HepG2 (cell line): ENCODE measurements at regions of chr12 and their contacts with region 1.

Region 1: GRCh38 chr12:92629349-92630065 is 73.3 kb upstream of the PLEKHG7 start:
- DNase-seq: no peak
- ATAC-seq: no peak
- H3K4me3 ChIP-seq: no peak overlapping the region
- H3K27ac ChIP-seq: no peak overlapping the region
- H3K4me1 ChIP-seq: no peaks in the 10 kb centered on the region
- H3K27me3 ChIP-seq: 0 out of 5 replicates have a peak, but pooled peaks cover 0 to 3% of the 10 kb centered on the region in 2 experiments
- CTCF ChIP-seq: no peak
- EP300 ChIP-seq: no peak
- POLR2A ChIP-seq: no peak
- RAD21 ChIP-seq: no peak

Region 2: GRCh38 chr12:92717202-92717601 is 87.7 kb after region 1 on chr12:
- CTCF ChIA-PET with region 1: no interaction called
- POLR2A ChIA-PET with region 1: no interaction called
- in situ Hi-C with region 1: no loop called
- intact Hi-C with region 1: no loop called
- DNase-seq: no peak
- ATAC-seq: no peak
- H3K4me3 ChIP-seq: no peak overlapping the region
- H3K27ac ChIP-seq: no peak overlapping the region
- H3K4me1 ChIP-seq: peaks cover 9% of the 10 kb centered on the region
- H3K27me3 ChIP-seq: no peaks in the 10 kb centered on the region; a peak in 1 of 5 replicates
- CTCF ChIP-seq: 0 out of 2 replicates have a peak, but pooled peaks have one; percentile 17
- EP300 ChIP-seq: no peak
- POLR2A ChIP-seq: no peak
- RAD21 ChIP-seq: no peak

Region 3: DNA sequence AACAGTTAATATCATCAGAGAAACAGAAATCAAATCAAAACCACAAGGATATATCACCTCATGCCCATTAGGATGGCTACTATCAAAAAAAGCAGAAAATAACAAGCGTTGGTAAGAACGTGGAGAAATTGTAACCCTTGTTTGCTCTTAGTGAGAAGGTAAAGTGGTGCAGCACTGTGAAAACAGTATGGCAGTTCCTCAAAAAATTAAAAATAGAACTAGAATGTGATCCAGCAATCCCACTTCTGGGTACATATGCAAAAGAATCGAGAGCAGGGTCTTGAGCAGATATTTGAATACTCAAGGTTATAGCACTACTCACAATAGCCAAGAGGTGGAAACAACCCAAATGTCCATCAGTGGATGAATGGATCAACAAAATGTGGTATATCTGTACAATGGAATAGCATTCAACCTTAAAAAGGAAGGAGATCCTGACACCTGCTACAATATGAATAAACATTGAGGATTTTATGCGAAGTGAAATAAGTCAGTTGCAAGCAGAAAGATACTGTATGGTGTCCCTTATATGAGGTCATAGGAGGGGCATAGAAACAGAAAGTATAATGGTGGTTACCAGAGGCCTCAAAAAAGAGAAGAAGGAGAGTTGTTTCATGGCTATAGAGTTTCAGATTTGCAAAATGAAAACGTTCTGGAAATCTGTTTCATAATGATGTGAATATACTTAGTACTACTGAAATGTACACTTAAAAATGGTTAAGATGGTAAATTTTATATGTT is 430.6 kb after region 1 on chr12:
- CTCF ChIA-PET with region 1: no interaction called
- POLR2A ChIA-PET with region 1: no interaction called
- in situ Hi-C with region 1: no loop called
- intact Hi-C with region 1: loop called (anchors 10 kb)
- DNase-seq: no peak
- ATAC-seq: no peak
- H3K4me3 ChIP-seq: no peak overlapping the region
- H3K27ac ChIP-seq: no peak overlapping the region
- H3K4me1 ChIP-seq: peaks cover 17% of the 10 kb centered on the region
- H3K27me3 ChIP-seq: no peaks in the 10 kb centered on the region; a peak in 1 of 5 replicates
- CTCF ChIP-seq: no peak
- EP300 ChIP-seq: no peak
- POLR2A ChIP-seq: no peak
- RAD21 ChIP-seq: no peak